Tibial artery (tissue), 4 donors: ENCODE measurements at regions of chr1 and their contacts with region 1.

Region 1: DNA sequence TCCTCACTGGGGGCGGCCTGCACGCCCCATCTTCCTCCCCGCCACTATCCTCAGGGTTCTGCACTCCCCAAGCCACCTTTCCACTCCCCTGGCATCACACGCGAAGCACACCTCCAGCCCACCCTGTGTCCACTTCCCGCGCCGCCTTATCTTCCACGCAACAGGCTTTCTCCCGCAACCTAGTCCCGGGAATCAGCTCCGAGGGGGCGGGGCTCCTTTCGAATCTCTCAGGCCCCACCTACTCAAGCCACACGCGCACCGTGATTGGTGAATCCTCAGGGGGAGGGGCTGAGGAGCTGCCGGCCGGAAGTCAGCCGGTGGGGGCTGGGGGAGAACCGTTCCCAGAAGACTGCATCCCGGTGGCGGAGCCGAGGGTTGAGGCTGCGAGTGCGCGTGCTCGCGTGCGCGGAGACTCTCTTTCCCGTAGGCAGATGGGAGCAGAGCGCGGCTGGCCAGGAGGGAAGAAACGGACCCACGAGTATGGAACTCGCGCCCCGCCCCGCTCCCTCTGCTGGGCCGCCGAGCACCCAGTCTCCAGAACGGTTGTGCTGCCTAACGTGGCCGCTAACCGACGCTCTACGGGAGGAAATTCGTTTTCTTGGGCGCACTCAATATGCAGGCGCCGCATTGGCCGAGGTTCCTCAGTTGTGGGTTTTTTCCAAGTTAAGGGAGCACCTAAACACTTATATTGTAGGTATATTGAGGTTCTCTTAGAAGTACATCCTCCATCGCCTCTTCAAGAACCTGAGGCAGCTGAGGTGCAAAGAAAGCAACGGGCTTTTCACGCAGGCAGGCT is at the start of gene PSRC1:
- DNase-seq: peak; percentile 97 to 98
- H3K4me3 ChIP-seq: peak within 1 kb of the TSS; percentile 54 to 59
- H3K27ac ChIP-seq: peak within 1 kb of the TSS; percentile 79 to 87
- H3K4me1 ChIP-seq: peaks cover 0 to 22% (median 21%) of the 10 kb centered on the region in 4 donors
- H3K27me3 ChIP-seq: no peaks in the 10 kb centered on the region
- CTCF ChIP-seq: peak; percentile 60 to 67

Region 2: DNA sequence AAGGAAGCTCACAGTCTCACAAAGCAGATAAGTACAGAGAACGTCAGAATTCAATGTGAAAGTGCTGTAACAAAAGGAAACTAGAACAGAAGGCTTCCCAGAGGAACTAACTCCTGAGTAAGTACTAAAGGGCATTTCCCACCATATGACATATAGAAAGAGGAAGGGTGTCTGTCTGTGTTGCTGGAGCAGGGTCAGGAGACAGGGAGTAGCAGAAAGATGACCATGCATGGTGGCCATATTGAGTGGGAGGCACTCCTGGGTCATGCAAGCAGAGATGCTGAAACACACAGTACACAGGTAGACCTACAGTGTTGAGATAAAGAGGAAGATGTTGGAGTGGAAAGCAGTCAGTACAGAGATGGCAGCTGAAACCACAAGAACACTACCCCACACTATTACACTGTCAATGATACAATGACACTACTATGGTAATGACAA is 1130.3 kb before region 1 on chr1:
- intact Hi-C with region 1: loop called (anchors 10 kb)
- DNase-seq: no peak
- H3K4me3 ChIP-seq: no peak overlapping the region
- H3K27ac ChIP-seq: no peak overlapping the region
- H3K4me1 ChIP-seq: peaks cover 0 to 6% (median 0%) of the 10 kb centered on the region in 4 donors
- H3K27me3 ChIP-seq: no peaks in the 10 kb centered on the region
- CTCF ChIP-seq: no peak

Region 3: DNA sequence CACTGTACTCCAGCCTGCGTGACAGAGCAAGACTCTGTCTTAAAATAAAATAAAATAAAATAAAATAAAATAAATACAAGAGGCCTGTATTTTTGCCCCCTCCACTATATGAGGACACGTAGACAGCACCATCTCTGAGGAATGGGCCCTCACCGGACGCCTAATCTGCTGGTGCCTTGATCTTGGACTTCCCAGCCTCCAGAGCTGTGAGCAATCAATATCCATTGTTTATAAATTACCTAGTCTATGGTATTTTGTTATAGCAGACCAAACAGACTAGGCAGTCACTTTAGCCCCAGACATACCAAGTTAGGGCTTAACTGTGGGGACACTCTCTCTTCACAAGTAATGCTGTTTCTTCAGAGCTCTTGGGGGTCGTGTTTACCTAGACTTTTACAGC is 162.8 kb before region 1 on chr1:
- intact Hi-C with region 1: no loop called
- DNase-seq: no peak
- H3K4me3 ChIP-seq: no peak overlapping the region
- H3K27ac ChIP-seq: no peak overlapping the region
- H3K4me1 ChIP-seq: no peaks in the 10 kb centered on the region
- H3K27me3 ChIP-seq: peaks cover 0 to 13% of the 10 kb centered on the region in 2 donors
- CTCF ChIP-seq: no peak

Region 4: DNA sequence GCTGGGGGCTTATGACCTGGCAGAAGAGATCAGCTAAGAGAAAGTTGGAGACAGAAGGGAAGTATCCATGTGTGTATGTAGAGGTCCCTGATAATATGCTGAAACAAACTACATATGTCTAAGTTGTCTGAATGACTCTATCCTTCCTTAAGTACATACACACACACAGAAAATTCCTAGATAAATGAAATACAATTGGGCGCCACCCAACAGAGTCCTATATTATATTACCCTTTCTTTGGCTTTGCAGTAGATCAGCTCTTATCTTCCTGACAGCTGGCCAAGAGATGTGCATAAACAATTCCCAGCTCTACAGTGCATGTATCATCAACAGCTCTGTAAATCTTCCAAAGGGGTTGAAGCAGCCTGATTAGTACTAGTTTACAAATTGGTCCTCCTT is 74.5 kb after region 1 on chr1:
- intact Hi-C with region 1: loop called (anchors 10 kb)
- DNase-seq: no peak
- H3K4me3 ChIP-seq: no peak overlapping the region
- H3K27ac ChIP-seq: peak overlapping the region in 1 of 2 donors; percentile 54
- H3K4me1 ChIP-seq: peaks cover 4 to 93% (median 25%) of the 10 kb centered on the region in 4 donors
- H3K27me3 ChIP-seq: no peaks in the 10 kb centered on the region
- CTCF ChIP-seq: no peak